Endothelial cell of umbilical vein (primary cell): ENCODE measurements at regions of chr9 and their contacts with region 1.

Region 1: GRCh38 chr9:131809941-131810344 is 70.1 kb upstream of the RAPGEF1 start:
- DNase-seq: no peak
- H3K4me3 ChIP-seq: no peak overlapping the region
- H3K27ac ChIP-seq: no peak overlapping the region
- H3K4me1 ChIP-seq: no peaks in the 10 kb centered on the region
- H3K27me3 ChIP-seq: peaks cover 0 to 2% of the 10 kb centered on the region in 2 experiments
- CTCF ChIP-seq: no peak
- POLR2A ChIP-seq: no peak

Region 2: DNA sequence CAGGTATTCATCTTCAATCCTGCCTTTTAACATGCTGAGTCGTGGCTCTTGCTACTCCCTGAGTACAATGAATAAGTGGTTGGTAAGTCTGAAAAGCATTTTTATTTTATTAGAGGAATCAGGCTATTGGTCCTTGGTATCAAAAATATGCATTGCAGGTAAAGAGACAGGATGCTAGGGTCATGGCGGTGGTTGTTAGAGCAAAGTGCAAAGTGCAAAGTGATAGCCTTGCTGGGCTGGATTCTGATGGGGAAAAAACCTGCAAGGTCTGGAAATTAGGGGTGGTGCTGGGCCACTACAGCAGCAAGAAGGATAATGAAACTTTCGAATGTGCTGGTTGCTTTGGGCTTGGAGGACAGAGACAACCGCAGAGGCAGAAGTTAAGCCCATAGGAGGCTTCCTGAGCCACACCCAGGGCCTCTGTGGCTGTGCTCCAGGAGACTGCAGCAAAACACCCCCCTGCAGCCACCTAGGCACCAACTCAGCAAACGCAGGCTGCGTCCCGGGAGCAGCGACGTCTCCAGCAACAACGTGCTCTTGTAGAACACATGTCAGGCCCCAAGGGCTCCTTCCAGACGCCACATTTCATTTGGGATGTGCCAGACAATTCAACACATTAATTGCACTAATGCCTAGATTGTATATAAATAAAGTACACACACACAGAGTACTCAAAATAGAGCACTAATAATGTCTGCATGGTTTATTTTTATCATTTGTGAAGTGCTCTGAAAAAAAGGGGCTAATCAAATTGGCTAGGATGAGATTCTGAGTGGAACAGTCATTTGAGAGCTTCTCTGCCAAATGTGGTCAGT is 79.7 kb after region 1 on chr9:
- CTCF ChIA-PET with region 1: no interaction called
- POLR2A ChIA-PET with region 1: no interaction called
- dilution Hi-C with region 1: loop called (anchors 10 kb)
- intact Hi-C with region 1: no loop called
- DNase-seq: no peak
- H3K4me3 ChIP-seq: no peak overlapping the region
- H3K27ac ChIP-seq: no peak overlapping the region
- H3K4me1 ChIP-seq: no peaks in the 10 kb centered on the region
- H3K27me3 ChIP-seq: no peaks in the 10 kb centered on the region
- CTCF ChIP-seq: no peak
- POLR2A ChIP-seq: no peak

Region 3: DNA sequence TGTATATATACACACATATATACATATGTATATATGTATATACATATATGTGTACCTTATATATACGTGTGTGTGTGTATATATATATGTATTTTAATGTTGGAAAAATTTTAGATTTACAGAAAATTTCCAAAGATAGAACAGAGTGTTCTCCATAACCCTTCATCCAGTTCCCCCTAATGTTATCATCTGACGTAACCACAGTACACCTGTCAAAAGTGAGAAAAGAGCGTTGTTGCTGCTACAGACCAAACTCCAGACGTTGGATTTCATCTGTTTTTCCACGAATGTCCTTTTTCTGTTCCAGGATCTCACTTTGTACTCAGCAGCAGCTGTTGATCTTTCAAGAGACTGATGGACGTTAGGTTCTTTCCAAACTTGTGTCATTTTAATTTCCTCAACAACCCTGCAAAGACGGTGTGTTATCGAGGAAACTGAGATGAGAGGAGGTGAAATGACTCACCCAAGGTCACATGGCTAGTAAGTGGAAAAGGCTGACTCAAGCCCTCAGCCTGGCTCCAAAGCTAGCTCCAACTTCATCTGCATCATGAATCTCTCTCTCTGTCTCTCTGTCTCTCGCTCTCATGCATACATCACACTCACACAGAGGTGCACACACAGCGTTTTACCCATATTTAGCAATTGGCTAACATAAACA is 334.9 kb after region 1 on chr9:
- CTCF ChIA-PET with region 1: no interaction called
- POLR2A ChIA-PET with region 1: no interaction called
- dilution Hi-C with region 1: no loop called
- intact Hi-C with region 1: no loop called
- DNase-seq: peak; percentile 32
- H3K4me3 ChIP-seq: no peak overlapping the region
- H3K27ac ChIP-seq: no peak overlapping the region
- H3K4me1 ChIP-seq: no peaks in the 10 kb centered on the region
- H3K27me3 ChIP-seq: peaks cover 14 to 19% of the 10 kb centered on the region in 2 experiments
- CTCF ChIP-seq: no peak
- POLR2A ChIP-seq: no peak